Mucosa of descending colon (tissue), 3 donors: ENCODE measurements at regions of chr17 and their contacts with region 1.

Region 1: DNA sequence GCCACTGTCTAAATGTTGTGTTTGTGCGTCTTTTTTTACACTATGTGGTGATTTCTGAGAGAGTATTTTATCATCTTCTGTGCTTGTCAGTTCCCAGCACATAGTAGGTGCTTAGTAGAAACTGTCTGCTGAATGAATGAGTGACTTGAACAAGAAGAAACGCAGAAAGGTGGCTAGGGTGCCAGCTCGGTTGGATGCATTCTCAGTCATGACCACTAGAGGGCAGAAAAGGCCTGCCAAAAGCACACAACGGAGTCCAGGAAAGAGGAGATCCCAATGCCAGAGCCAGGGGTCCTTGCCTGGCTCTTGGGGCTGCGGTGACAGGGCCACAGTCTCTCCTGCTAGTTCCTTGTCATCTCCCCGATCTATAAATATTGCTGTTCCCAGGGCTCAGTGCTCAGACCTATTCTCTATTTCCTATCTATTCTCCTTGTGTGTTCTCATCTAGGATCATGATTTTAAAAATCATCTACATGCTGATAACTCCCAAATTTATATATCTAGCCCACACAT is 57.3 kb upstream of the CCL1 start:
- DNase-seq: peak in 2 of 3 donors; percentile 48 to 81
- ATAC-seq: peak; percentile 76
- H3K4me3 ChIP-seq: no peak overlapping the region
- H3K4me1 ChIP-seq: no peaks in the 10 kb centered on the region
- CTCF ChIP-seq: peak; percentile 89

Region 2: DNA sequence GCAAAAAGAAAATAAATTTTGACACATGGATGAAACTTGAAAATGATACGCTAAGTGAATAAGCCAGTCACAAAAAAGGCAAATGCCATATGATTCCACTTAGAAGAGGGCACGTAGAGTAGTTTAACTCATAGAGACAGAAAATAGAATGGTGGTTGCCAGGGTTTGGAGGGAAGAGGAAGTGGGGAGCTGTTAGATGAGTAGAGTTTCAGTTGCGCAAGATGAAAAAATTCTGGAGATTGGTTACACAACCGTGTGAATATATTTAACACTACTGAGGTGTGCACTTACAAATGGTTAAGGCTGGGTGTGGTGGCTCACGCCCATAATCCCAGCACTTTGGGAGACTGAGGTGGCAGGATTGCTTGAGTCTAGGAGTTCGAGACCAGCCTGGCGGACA is 65.7 kb after region 1 on chr17:
- intact Hi-C with region 1: no loop called
- DNase-seq: no peak
- ATAC-seq: no peak
- H3K4me3 ChIP-seq: no peak overlapping the region
- H3K4me1 ChIP-seq: no peaks in the 10 kb centered on the region
- CTCF ChIP-seq: no peak

Region 3: DNA sequence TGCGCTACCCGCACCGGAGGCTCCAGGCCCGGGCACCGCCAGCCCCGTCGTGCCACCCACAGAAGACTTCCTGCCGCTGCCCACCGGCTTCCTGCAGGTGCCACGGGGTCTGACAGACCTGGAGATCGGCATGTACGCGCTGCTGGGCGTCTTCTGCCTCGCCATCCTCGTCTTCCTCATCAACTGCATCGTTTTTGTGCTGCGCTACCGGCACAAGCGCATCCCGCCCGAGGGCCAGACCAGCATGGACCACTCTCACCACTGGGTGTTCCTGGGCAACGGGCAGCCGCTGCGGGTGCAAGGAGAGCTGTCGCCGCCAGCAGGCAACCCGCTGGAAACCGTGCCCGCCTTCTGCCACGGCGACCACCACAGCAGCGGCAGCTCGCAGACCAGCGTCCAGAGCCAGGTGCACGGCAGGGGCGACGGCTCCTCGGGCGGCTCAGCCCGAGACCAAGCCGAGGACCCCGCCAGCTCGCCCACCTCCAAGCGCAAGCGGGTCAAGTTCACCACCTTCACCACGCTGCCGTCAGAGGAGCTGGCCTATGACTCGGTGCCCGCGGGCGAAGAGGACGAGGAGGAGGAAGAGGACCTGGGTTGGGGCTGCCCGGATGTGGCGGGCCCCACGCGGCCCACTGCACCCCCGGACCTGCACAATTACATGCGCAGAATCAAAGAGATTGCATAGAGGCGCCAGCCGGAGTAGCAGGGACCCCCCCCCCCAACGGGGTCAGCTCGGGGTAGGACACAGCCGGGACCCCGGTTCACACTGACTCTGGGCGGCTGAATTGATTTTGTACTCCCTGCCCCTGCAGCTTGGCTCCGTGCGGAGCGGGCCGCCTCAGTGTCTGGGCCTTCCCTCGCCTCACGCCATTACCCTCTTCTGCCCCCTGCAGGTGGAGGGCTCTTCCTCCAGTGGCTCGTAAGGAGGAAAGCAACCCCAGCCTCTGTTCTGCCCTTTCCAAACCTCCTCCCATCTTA is 217.5 kb after region 1 on chr17:
- intact Hi-C with region 1: loop called (anchors 10 kb)
- DNase-seq: peak; percentile 66 to 87 (median 80)
- ATAC-seq: peak; percentile 88
- H3K4me3 ChIP-seq: no peak overlapping the region
- H3K4me1 ChIP-seq: no peaks in the 10 kb centered on the region
- CTCF ChIP-seq: peak; percentile 72